Activated CD8-positive, alpha-beta T cell treated with anti-CD3 and anti-CD28 coated beads for 36 hours (primary cell): ENCODE measurements at regions of chr2 and their contacts with region 1.

Region 1: GRCh38 chr2:84631047-84631446 is 114.7 kb downstream of the DNAH6 start:
- DNase-seq: no peak
- ATAC-seq: peak; percentile 88
- H3K4me3 Mint-ChIP-seq: no peak overlapping the region
- H3K27ac Mint-ChIP-seq: no peak overlapping the region
- H3K4me1 Mint-ChIP-seq: peaks cover 25% of the 10 kb centered on the region
- H3K27me3 Mint-ChIP-seq: no peaks in the 10 kb centered on the region
- CTCF ChIP-seq: peak; percentile 70

Region 2: GRCh38 chr2:84495539-84496146 is 135.4 kb before region 1 on chr2:
- CTCF ChIA-PET with region 1: interaction called, 12 read pairs
- POLR2A ChIA-PET with region 1: no interaction called
- intact Hi-C with region 1: loop called (anchors 5 kb)
- DNase-seq: peak; percentile 37
- ATAC-seq: peak; percentile 99
- H3K4me3 Mint-ChIP-seq: no peak overlapping the region
- H3K27ac Mint-ChIP-seq: no peak overlapping the region
- H3K4me1 Mint-ChIP-seq: peaks cover 15% of the 10 kb centered on the region
- H3K27me3 Mint-ChIP-seq: no peaks in the 10 kb centered on the region
- CTCF ChIP-seq: peak; percentile 74

Region 3: DNA sequence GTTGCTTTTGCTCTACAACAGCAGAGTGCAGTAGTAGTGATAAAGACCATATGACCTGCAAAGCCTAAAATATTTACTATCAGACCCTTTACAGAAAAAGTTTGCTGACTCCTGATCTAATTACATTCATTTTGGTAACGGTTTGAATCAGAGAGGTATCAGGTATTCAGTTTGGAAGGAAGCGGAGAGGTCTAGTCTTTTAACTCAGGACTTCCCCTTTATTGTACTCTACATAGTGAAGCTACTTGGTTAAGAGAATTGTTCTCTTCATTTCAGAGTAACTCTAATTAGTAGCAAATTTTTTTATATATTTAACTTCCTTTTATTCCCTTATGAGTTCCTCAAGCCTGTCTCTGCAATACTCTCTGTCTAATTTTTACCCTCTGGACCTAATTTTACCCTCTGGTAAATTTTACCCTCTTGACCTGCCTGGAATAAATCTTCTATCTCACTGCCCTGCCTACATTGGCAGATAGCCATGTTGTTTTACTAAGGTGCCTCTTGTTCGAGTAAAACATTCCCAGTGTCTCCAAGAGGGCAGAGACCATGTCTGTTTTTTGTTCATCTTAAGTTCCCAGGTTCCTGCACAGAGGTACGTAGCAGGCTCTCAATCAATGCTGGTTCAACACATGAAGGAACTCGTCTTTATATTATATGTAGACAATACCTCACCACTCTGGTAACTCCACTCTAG is 55.9 kb after region 1 on chr2:
- CTCF ChIA-PET with region 1: no interaction called
- POLR2A ChIA-PET with region 1: no interaction called
- intact Hi-C with region 1: no loop called
- DNase-seq: no peak
- ATAC-seq: peak; percentile 82
- H3K4me3 Mint-ChIP-seq: no peak overlapping the region
- H3K27ac Mint-ChIP-seq: peak overlapping the region; percentile 26
- H3K4me1 Mint-ChIP-seq: peaks cover 16% of the 10 kb centered on the region
- H3K27me3 Mint-ChIP-seq: no peaks in the 10 kb centered on the region
- CTCF ChIP-seq: no peak